IMR-90 (cell line): ENCODE measurements at regions of chr5 and their contacts with region 1.

Region 1: DNA sequence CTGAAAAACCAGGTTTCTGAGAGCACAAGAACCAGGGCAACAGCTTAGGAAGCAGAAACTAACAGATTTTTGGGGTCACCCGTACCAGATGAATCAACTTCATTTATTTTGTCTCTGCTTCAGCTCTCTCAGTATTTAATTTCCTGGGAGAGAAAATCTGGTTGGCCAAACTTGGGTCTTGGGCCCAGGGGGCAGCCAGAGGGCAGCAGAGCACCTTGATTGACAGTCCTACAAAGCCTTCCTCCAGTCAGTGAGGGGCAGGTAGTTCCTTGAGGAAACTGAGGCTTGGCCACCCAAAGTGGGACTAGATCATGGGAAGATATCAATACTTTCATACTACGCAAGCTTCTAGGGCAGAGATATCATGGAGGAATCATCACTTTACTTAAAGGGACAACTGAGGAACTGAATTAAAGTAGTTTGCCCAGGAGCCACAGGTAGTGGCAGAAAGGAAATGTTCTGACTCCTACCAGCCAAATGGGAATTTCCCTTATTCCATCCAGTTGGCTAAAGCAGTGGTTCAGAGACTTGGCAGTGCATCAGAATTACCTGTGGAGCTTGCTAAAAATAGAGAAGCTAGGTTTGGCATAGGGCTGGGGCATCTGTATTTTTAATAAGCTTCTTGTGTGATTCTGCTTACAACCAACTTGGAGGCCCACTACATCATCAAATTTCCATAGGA is 21.5 kb upstream of the ARHGAP26 start:
- DNase-seq: no peak
- ATAC-seq: no peak
- H3K4me3 ChIP-seq: no peak overlapping the region
- H3K27ac ChIP-seq: no peak overlapping the region
- H3K4me1 ChIP-seq: peaks cover 4% of the 10 kb centered on the region
- H3K27me3 ChIP-seq: peaks cover 2% of the 10 kb centered on the region; the same call in 1 of the 2 replicates
- CTCF ChIP-seq: peak; percentile 16; the same call in 1 of the 2 replicates
- POLR2A ChIP-seq: no peak
- RAD21 ChIP-seq: peak; percentile 33; the same call in 1 of the 2 replicates

Region 2: GRCh38 chr5:142881076-142881783 is 132.5 kb after region 1 on chr5:
- CTCF ChIA-PET with region 1: interaction called, 18 read pairs
- POLR2A ChIA-PET with region 1: no interaction called
- dilution Hi-C with region 1: no loop called
- in situ Hi-C with region 1: no loop called
- intact Hi-C with region 1: no loop called
- DNase-seq: peak; percentile 91
- ATAC-seq: peak; percentile 84
- H3K4me3 ChIP-seq: no peak overlapping the region
- H3K27ac ChIP-seq: no peak overlapping the region
- H3K4me1 ChIP-seq: peaks cover 5% of the 10 kb centered on the region
- H3K27me3 ChIP-seq: no peaks in the 10 kb centered on the region; the same call in 1 of the 2 replicates
- CTCF ChIP-seq: no peak
- POLR2A ChIP-seq: no peak
- RAD21 ChIP-seq: no peak